ENCODE measurements at regions of chr2 and their contacts with region 1.

Region 1: DNA sequence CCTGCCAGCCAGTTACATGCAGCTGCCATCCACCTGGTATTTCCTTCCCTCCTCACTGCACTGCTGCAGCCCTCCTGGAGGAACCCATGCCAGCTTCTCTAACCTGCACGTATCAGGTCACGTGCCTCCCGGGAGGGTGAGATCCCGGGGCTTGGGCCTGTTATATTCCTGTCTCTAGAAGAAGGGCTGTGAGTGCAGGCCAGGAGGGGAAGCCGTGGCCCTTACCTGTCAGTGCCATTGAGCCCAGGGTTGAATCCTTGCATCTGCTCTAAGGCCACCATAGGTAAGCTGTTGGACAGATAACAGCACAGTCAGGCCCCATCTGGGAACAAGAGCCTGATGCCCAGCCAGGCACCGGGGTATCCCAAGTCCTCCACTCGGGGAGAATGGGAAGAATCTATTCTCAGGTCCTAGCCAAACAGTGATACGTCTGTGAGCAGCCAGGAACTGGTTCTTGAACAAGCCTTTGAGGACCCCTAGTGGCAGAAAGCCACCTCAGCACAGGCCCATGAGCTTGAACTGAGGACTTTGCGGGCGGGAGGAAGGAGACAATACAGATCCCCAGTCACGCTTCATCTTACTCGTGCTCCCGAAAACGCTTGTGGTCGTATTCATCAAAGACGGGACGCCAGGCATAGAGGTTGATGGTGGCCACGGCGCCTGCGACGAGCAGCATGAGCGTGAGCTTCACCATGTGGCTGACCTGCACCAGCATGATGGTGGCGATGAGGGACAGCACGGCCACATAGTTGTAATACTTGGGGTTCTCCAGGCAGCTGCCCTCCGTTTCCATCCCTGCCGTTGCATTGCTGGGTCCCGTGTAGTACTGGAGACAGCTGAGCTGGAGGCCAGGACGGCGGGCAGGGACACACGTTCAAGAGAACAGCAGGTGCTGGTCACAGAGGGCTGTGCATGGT is 34.4 kb downstream of the CENPO start:
- DNase-seq: peak; percentile 79 to 81
- H3K4me3 ChIP-seq: no peak overlapping the region
- H3K27ac ChIP-seq: no peak overlapping the region; the same call in 1 of the 2 replicates
- H3K4me1 ChIP-seq: peaks cover 1 to 18% (median 11%) of the 10 kb centered on the region in 4 experiments; a peak in 6 of 7 replicates
- H3K27me3 ChIP-seq: no peaks in the 10 kb centered on the region
- CTCF ChIP-seq: peak in 2 of 3 experiments; percentile 88 to 96; a peak in 3 of 4 replicates
- EP300 ChIP-seq: no peak
- POLR2A ChIP-seq: no peak; a peak in 1 of 3 replicates
- RAD21 ChIP-seq: peak; percentile 94 to 96

Region 2: GRCh38 chr2:24409700-24410556 is 417.7 kb before region 1 on chr2:
- CTCF ChIA-PET with region 1: interaction called, 34 read pairs
- POLR2A ChIA-PET with region 1: interaction called, 3 read pairs
- DNase-seq: no peak
- H3K4me3 ChIP-seq: no peak overlapping the region
- H3K27ac ChIP-seq: no peak overlapping the region
- H3K4me1 ChIP-seq: peaks cover 0 to 7% (median 3%) of the 10 kb centered on the region in 4 experiments; a peak in 2 of 7 replicates
- H3K27me3 ChIP-seq: no peaks in the 10 kb centered on the region
- CTCF ChIP-seq: peak in 2 of 3 experiments; percentile 76 to 90; a peak in 3 of 4 replicates
- EP300 ChIP-seq: no peak
- POLR2A ChIP-seq: no peak
- RAD21 ChIP-seq: peak; percentile 90 to 97

Region 3: GRCh38 chr2:24421668-24422067 is 405.9 kb before region 1 on chr2:
- CTCF ChIA-PET with region 1: interaction called, 31 read pairs
- POLR2A ChIA-PET with region 1: no interaction called
- DNase-seq: peak in 1 of 2 experiments; percentile 83
- H3K4me3 ChIP-seq: no peak overlapping the region
- H3K27ac ChIP-seq: no peak overlapping the region
- H3K4me1 ChIP-seq: peaks cover 0 to 4% (median 1%) of the 10 kb centered on the region in 4 experiments; a peak in 2 of 7 replicates
- H3K27me3 ChIP-seq: no peaks in the 10 kb centered on the region
- CTCF ChIP-seq: peak; percentile 26 to 75 (median 62)
- EP300 ChIP-seq: no peak
- POLR2A ChIP-seq: no peak
- RAD21 ChIP-seq: peak; percentile 83 to 86

Region 4: GRCh38 chr2:24792874-24793760 is 34.5 kb before region 1 on chr2 and contains the starts of genes CENPO and PTRHD1:
- CTCF ChIA-PET with region 1: interaction called, 9 read pairs
- POLR2A ChIA-PET with region 1: interaction called, 13 read pairs
- DNase-seq: peak; percentile 90 to 94
- H3K4me3 ChIP-seq: peak within 1 kb of the TSS; percentile 74 to 98 (median 86)
- H3K27ac ChIP-seq: peak within 1 kb of the TSS; percentile 100
- H3K4me1 ChIP-seq: peaks cover 0 to 7% (median 6%) of the 10 kb centered on the region in 4 experiments; a peak in 4 of 7 replicates
- H3K27me3 ChIP-seq: no peaks in the 10 kb centered on the region
- CTCF ChIP-seq: peak in 2 of 3 experiments; percentile 24 to 37; a peak in 2 of 4 replicates
- EP300 ChIP-seq: peak in 1 of 2 experiments; percentile 61; a peak in 1 of 3 replicates
- POLR2A ChIP-seq: peak; percentile 81 to 95
- RAD21 ChIP-seq: peak; percentile 22 to 28; a peak in 2 of 4 replicates
- total RNA-seq, gene CENPO: 46.3 and 47.0 TPM in 2 replicates
- total RNA-seq, gene PTRHD1: 46.2 and 48.6 TPM in 2 replicates

Region 5: DNA sequence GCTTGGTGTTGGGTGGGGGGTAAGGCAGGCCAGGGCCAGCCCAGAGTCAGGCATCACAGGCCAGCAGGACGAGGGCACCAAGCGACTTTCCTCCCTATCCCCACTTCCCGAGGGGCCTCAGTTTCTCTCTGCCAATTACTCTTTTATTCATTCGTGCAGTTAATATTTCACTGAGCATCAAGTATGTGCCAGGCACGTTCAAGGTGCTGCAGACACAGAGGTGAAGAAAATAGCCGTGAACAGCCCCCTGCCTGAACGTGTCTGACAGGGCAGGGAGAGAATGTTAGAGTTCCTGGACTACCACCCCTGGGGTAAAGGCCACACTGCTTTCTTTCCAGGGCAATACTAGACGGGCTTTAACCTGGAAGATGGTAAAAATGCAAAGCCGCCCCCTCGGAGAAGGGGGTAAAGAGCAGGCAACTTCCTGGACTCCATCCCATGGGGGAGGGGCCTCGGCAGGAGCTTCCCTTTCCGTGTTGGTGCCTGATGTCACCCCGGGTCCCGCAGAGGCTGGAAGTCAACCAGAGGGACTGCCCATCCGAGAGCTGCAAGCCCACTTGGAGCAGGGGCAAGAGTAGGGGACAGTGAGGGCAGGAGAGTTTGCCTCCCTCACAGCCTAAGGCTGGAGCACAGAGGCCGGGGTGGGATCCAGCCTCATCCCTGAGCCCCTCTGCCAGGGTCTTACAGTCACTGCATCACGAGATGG is 12.7 kb after region 1 on chr2:
- CTCF ChIA-PET with region 1: interaction called, 20 read pairs
- POLR2A ChIA-PET with region 1: no interaction called
- DNase-seq: no peak
- H3K4me3 ChIP-seq: no peak overlapping the region
- H3K27ac ChIP-seq: no peak overlapping the region
- H3K4me1 ChIP-seq: no peaks in the 10 kb centered on the region
- H3K27me3 ChIP-seq: no peaks in the 10 kb centered on the region
- CTCF ChIP-seq: no peak
- EP300 ChIP-seq: no peak
- POLR2A ChIP-seq: no peak
- RAD21 ChIP-seq: no peak

Region 6: GRCh38 chr2:25078171-25079049 is 250.8 kb after region 1 on chr2:
- CTCF ChIA-PET with region 1: no interaction called
- POLR2A ChIA-PET with region 1: no interaction called
- DNase-seq: no peak
- H3K4me3 ChIP-seq: no peak overlapping the region
- H3K27ac ChIP-seq: no peak overlapping the region
- H3K4me1 ChIP-seq: 0 out of 7 replicates have a peak, but pooled peaks cover 0 to 3% (median 1%) of the 10 kb centered on the region in 4 experiments
- H3K27me3 ChIP-seq: no peaks in the 10 kb centered on the region
- CTCF ChIP-seq: no peak
- EP300 ChIP-seq: no peak
- POLR2A ChIP-seq: no peak
- RAD21 ChIP-seq: no peak